ENCODE measurements at regions of chr5 and their contacts with region 1.

Region 1: GRCh38 chr5:69217548-69218526 is 16.8 kb upstream of the CDK7 start:
- DNase-seq: peak; percentile 99
- ATAC-seq: peak; percentile 99

Region 2: DNA sequence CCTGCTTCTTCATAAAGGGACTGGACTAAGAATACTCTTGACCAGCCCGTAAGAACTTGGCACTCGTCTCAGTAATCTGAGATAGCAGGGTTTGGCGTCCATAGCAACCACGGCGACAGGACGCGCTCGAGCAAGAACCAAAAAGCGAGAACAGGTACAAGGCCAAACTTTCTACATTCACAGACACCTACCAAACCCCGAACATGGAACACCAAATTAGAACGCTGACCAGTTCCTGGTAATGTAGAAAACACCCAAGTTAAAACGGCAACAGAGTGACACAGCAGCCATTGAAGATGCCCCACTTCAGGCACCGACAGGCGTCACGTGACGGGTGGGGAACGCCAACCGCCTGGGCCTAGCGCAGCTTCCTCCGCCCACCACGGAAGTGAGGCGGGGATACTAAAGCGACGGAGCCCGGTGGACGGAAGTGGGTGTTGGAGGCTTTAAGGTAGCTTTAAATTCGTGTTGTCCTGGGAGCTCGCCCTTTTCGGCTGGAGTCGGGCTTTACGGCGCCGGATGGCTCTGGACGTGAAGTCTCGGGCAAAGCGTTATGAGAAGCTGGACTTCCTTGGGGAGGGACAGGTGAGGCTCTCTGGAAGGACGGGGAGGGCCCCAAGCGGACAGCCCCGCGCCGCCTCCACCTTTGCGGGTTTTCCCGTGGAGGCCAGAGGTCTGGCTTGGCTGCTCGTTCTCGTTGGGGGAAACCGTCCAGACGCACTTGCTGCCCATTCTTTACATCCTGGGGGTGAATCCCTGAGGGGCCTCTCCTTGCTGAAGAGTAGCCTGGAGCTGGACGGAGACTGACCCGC is 16.8 kb after region 1 on chr5 and contains the start of gene CDK7:
- intact Hi-C with region 1: loop called (anchors 1 kb)
- DNase-seq: peak; percentile 96
- ATAC-seq: peak; percentile 100
- total RNA-seq, gene CDK7: 10.5 TPM

Region 3: GRCh38 chr5:69492391-69492922 is 274.6 kb after region 1 on chr5 and contains the start of gene OCLN:
- intact Hi-C with region 1: no loop called
- DNase-seq: no peak
- ATAC-seq: peak; percentile 42
- total RNA-seq, gene OCLN: 1.5 TPM

Measured in Right ventricle myocardium inferior (tissue), 1 donor.